ENCODE measurements at regions of chr4 and their contacts with region 1.

Region 1: DNA sequence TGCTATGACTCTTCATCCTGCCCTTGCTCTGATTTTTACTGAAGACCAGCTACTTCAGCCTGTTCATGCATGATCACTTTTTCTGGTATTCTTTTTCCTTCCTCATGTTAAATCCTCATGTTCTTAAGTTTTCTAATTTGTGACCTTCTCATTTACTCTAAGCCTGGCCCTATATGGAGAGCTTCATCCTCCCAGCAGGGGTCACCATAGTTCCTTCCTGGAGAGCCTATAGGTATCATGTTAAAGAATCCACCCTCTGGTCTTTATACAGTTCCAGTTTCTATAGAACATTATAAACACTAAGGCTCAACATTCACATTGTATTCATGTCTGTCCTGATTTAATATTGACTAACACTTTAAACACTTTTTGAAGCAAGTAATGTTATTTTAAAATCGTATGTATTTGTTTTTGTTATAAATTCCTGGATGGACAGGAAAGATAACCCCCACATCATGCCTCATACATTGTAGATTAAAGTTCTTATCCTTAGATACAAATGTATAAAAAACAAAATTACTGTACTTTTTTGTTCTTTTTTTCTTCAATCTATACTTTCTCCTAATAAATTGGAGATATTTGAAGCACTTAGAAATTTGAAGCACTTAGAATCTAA is 53.8 kb upstream of the OTUD4 start:
- DNase-seq: peak in 1 of 2 donors; percentile 76
- ATAC-seq: peak; percentile 77 to 92 (median 88)
- H3K4me3 ChIP-seq: no peak overlapping the region
- H3K4me3 Mint-ChIP-seq: no peak overlapping the region
- H3K27ac ChIP-seq: no peak overlapping the region
- H3K27ac Mint-ChIP-seq: no peak overlapping the region
- H3K4me1 ChIP-seq: no peaks in the 10 kb centered on the region
- H3K4me1 Mint-ChIP-seq: no peaks in the 10 kb centered on the region
- H3K27me3 ChIP-seq: no peaks in the 10 kb centered on the region
- H3K27me3 Mint-ChIP-seq: peaks cover 2 to 5% of the 10 kb centered on the region in 2 donors
- CTCF ChIP-seq: peak; percentile 67

Region 2: DNA sequence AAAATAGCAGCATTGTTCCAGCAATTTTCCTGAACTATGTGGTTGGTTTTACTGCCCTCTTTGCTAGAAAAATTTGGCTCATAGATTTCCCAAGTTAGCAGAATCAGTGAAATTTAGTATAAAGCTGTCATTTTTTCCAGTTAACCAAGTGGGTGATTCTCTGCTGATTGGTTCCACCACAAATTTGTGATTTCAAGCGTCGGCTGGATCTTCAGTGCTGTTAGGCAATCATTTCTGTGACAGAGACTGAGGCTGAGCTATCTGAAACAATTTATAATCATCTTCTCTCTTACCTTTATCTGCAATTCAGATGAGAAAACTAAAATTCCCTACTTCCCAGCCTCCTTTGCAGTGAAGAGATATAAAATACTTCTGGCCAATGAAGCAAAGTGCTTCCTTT is 14.8 kb after region 1 on chr4:
- intact Hi-C with region 1: no loop called
- DNase-seq: no peak
- ATAC-seq: no peak
- H3K4me3 ChIP-seq: no peak overlapping the region
- H3K4me3 Mint-ChIP-seq: no peak overlapping the region
- H3K27ac ChIP-seq: no peak overlapping the region
- H3K27ac Mint-ChIP-seq: no peak overlapping the region
- H3K4me1 ChIP-seq: no peaks in the 10 kb centered on the region
- H3K4me1 Mint-ChIP-seq: no peaks in the 10 kb centered on the region
- H3K27me3 ChIP-seq: peaks cover 5% of the 10 kb centered on the region
- H3K27me3 Mint-ChIP-seq: peaks cover 19 to 25% of the 10 kb centered on the region in 2 donors
- CTCF ChIP-seq: no peak

Region 3: GRCh38 chr4:145315811-145316225 is 81.6 kb after region 1 on chr4:
- intact Hi-C with region 1: no loop called
- DNase-seq: no peak
- ATAC-seq: no peak
- H3K4me3 ChIP-seq: no peak overlapping the region
- H3K4me3 Mint-ChIP-seq: no peak overlapping the region
- H3K27ac ChIP-seq: no peak overlapping the region
- H3K27ac Mint-ChIP-seq: no peak overlapping the region
- H3K4me1 ChIP-seq: no peaks in the 10 kb centered on the region
- H3K4me1 Mint-ChIP-seq: no peaks in the 10 kb centered on the region
- H3K27me3 ChIP-seq: no peaks in the 10 kb centered on the region
- H3K27me3 Mint-ChIP-seq: peaks cover 3 to 10% of the 10 kb centered on the region in 2 donors
- CTCF ChIP-seq: no peak

Region 4: GRCh38 chr4:145482209-145483037 is 248.2 kb after region 1 on chr4:
- intact Hi-C with region 1: no loop called
- DNase-seq: peak; percentile 29 to 34
- ATAC-seq: peak; percentile 46
- H3K4me3 ChIP-seq: peak overlapping the region; percentile 30
- H3K4me3 Mint-ChIP-seq: no peak overlapping the region
- H3K27ac ChIP-seq: no peak overlapping the region
- H3K27ac Mint-ChIP-seq: no peak overlapping the region
- H3K4me1 ChIP-seq: no peaks in the 10 kb centered on the region
- H3K4me1 Mint-ChIP-seq: peaks cover 9 to 15% of the 10 kb centered on the region in 2 donors
- H3K27me3 ChIP-seq: no peaks in the 10 kb centered on the region
- H3K27me3 Mint-ChIP-seq: peaks cover 17 to 27% of the 10 kb centered on the region in 2 donors
- CTCF ChIP-seq: no peak

Region 5: DNA sequence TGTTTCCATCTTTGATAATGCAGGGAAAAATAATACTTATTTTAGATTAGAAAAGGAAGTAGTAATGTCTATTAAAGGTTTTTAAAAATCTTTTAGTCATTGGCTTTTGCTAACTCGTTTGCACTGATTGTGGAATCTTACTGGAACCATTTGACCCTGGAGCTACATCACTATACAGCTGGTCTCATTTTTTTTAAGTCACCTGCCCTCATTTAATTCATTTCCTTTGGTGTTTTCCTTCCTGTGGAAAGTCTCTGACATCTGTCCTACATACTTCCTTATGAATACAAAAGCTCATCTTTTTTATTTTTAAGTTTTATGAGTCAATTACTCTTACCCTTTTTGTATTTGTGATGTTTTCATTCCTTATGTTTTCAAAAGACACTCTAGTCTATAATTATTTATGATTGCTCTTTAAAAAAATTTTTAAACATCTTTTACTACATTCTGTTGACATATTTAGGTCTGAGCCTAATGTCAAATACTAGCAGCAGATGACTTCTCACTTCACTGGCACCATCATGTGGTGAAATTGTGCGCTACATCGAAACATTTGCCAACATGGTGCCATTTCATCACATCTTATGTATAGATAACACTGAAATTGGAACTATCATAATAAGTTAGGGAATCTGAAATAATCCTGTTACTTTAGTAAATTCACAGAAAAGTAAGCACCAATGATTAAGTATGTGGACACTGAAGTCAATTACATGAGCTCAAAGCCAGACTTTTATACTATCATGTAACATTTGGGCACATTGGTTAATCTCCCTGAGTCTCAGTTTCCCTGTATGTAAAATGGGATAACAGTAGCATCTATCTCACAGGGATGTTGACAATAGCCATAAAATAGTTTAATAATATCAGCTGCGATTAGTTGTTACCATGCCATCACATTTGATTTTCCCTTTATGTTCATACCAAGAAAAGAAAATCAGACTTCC is 375.6 kb after region 1 on chr4:
- intact Hi-C with region 1: loop called (anchors 1 kb)
- DNase-seq: peak; percentile 39 to 77
- ATAC-seq: peak; percentile 64 to 76 (median 73)
- H3K4me3 ChIP-seq: no peak overlapping the region
- H3K4me3 Mint-ChIP-seq: no peak overlapping the region
- H3K27ac ChIP-seq: no peak overlapping the region
- H3K27ac Mint-ChIP-seq: no peak overlapping the region
- H3K4me1 ChIP-seq: no peaks in the 10 kb centered on the region
- H3K4me1 Mint-ChIP-seq: no peaks in the 10 kb centered on the region
- H3K27me3 ChIP-seq: no peaks in the 10 kb centered on the region
- H3K27me3 Mint-ChIP-seq: peaks cover 3 to 17% of the 10 kb centered on the region in 2 donors
- CTCF ChIP-seq: peak; percentile 66